Head of caudate nucleus (tissue), 42 donors: ENCODE measurements at regions of chr17 and their contacts with region 1.

Region 1: DNA sequence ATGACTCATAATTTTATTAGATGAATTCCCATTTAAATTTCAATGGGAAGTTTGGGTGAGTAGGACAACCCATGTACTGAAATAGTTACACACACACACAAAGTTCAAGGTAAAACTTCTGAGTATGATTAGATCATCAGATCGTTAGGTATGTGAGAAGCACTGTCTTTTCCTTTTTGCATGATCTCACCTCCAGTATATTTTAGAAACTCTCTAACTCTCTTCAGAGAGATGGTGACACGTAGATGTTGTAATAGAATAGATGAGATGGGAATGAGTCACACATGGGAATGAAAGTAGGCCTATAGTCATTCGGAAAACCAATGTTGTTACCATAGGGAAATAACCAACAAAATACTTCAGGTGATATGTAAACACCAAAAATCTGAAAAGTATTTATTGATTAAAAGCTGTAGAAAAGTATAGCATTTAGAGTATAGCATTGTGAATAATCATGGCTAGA is 22.2 kb downstream of the KRT23 start:
- DNase-seq: no peak

Region 2: GRCh38 chr17:40956401-40957254 is 41.4 kb after region 1 on chr17:
- intact Hi-C with region 1: no loop called
- DNase-seq: no peak

Region 3: GRCh38 chr17:41665566-41666236 is 750.5 kb after region 1 on chr17:
- intact Hi-C with region 1: loop called (anchors 10 kb)
- DNase-seq: peak; percentile 71 to 96 (median 89)